Activated CD8-positive, alpha-beta T cell treated with anti-CD3 and anti-CD28 coated beads, Interleukin-2, amount 10 ng/mL, durations not matched to agents 7 days and 5 days (primary cell): ENCODE measurements at regions of chr17 and their contacts with region 1.

Region 1: DNA sequence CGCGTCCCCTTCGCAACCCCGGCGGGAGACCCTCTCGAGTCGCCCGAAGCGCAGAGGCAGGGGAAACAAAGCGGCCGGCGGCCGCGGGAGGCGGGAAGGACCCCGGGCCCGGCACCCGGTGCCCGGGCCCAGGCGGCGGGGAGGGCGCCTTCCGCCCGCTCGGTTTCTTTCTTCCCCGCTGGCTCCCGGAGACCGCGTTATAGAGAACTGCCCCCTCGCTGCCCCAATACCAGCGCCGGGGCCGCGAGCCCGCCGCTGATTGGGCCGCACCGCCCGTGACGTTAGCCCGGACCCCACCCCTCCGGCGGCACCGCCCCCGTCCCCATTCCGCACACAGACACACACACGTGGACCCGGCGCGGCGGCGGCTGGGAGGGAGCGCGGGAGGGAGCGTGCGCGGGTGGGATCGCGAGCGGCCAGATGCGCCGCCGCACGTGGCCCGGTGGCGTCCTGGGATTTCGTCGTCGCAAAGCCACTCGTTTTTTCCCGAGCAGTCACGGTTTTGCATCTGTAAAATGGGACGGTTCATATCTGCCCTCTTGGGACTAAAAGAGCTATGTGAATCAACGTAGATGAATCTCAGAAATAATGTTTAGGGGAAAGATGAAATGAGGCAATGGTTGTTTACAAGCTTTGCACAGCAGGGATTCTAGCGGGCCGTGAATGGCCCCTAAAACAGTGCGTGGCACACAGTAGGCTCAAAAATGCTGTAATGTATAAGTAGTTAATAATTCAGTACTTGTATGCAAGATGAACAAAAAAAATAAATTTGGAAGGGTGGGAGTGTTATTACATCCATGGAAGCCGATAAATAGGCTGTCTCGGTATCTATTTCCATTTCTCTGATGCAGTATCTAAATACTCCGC is at the start of gene EPOP:
- DNase-seq: peak; percentile 91
- ATAC-seq: peak; percentile 89
- H3K4me3 Mint-ChIP-seq: peak within 1 kb of the TSS; percentile 54
- H3K27ac Mint-ChIP-seq: peak within 1 kb of the TSS; percentile 60
- H3K4me1 Mint-ChIP-seq: peaks cover 40% of the 10 kb centered on the region
- H3K27me3 Mint-ChIP-seq: peaks cover 22% of the 10 kb centered on the region
- total RNA-seq, gene EPOP: 11.4 to 11.6 TPM

Region 2: DNA sequence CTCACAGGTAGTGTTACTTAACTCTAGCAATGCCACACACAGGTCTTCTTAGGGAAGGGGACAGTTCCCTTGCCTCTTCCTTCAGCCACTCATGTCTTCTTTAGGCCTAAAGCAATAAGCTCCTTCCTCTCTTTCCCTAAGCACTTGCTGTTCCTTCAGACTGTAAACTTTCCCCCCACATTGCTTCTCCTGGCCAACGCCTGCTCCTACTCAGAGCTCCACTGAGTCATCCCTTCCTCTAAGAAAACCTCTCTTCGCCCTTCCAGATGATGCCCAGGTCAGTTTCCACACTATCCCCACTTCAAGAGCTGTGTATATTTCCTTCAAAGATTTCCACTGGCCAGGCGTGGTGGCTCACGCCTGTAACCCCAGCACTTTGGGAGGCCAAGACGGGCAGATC is 12.3 kb after region 1 on chr17:
- CTCF ChIA-PET with region 1: interaction called, 19 read pairs
- POLR2A ChIA-PET with region 1: no interaction called
- DNase-seq: no peak
- ATAC-seq: no peak
- H3K4me3 Mint-ChIP-seq: no peak overlapping the region
- H3K27ac Mint-ChIP-seq: no peak overlapping the region
- H3K4me1 Mint-ChIP-seq: no peaks in the 10 kb centered on the region
- H3K27me3 Mint-ChIP-seq: peaks cover 12% of the 10 kb centered on the region

Region 3: DNA sequence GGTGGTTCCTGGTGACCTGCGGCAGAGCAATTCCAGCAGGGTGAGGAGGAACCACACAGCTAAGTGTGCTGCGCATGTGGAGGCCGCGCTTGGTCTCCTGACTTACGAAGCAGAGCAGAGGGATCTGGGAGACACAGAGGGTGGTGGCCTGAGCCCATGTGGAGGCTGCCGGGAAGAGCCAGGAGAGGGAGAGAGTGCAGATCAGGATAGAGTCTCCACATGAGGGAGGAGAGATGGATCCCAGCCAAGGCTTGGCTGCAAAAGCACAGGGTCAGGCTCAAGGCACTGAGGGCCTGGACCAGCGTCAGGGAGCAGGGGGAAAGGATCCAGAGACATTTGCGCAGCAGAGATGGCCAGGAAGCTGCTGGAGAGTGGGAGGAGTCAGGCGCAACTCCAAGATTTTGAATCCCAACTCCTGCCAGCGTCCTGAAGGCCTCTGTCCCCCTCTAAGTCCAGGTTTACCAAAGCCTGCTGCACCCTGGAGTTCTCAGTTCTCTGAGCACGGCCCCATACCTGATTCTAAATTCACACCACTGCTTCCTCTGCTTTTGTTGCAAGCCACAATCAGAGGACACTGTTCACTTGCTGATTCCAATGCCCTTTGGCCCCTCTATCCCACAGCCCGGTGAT is 18.8 kb after region 1 on chr17:
- CTCF ChIA-PET with region 1: interaction called, 22 read pairs
- POLR2A ChIA-PET with region 1: interaction called, 3 read pairs
- DNase-seq: no peak
- ATAC-seq: no peak
- H3K4me3 Mint-ChIP-seq: no peak overlapping the region
- H3K27ac Mint-ChIP-seq: no peak overlapping the region
- H3K4me1 Mint-ChIP-seq: peaks cover 26% of the 10 kb centered on the region
- H3K27me3 Mint-ChIP-seq: no peaks in the 10 kb centered on the region

Region 4: DNA sequence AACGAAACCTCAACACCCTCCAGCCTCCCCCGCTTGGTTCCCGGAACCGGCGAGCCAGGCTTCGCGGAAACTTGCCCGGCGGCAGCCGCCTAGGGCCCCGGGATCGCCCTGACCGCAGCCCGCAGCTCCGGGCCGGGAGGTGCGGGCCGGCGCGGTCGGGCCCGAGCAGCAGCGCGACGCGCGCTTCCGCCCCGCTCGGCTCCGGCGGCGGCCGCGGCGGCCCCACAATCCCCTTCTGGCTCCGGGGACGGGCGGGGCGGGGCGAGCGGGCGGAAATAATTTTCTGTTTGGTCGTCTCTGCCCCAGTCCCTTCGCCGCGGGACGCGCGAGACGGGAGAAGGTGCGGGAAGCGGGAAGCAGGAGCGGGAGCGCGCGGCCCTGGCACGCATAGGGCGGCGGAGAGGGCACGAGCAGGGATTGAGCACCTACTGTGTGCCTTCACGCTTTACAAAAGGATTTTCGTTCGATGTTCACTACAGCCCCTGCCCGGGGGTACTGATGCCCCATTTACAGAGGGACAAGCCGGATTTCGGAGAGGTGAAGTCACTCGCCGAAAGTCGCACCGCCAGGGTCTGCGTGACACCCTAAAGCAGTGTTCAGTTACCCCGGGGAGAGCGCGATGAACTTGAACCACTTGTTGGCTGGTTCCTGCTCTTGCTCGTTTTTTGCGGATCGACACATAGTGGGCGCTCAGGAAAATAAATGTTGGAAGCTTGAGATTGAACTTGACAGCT is 27.4 kb after region 1 on chr17:
- CTCF ChIA-PET with region 1: interaction called, 22 read pairs
- POLR2A ChIA-PET with region 1: interaction called, 13 read pairs
- DNase-seq: peak; percentile 85
- ATAC-seq: peak; percentile 47
- H3K4me3 Mint-ChIP-seq: peak overlapping the region; percentile 87
- H3K27ac Mint-ChIP-seq: peak overlapping the region; percentile 97
- H3K4me1 Mint-ChIP-seq: peaks cover 52% of the 10 kb centered on the region
- H3K27me3 Mint-ChIP-seq: no peaks in the 10 kb centered on the region

Region 5: DNA sequence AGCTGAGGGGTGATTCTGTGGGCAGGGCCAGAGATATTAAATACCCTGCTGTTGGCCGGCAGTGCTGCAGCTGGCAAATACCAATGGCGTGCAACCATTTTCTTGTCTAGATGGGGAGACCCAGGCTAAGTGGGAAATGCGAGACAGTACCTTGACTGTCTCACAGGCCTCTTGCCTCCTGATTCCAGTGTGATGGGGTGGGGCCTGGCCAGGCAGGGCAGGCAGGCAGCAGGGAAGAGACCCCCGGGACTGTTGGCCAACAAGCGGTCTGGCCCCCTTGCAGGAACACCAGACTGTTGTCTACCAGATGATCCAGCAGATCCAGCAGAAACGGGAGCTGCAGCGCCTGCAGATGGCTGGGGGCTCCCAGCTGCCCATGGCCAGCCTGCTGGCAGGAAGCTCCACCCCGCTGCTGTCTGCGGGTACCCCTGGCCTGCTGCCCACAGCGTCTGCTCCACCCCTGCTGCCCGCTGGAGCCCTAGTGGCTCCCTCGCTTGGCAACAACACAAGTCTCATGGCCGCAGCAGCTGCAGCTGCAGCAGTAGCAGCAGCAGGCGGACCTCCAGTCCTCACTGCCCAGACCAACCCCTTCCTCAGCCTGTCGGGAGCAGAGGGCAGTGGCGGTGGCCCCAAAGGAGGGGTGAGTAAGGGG is 49.5 kb after region 1 on chr17:
- CTCF ChIA-PET with region 1: interaction called, 29 read pairs
- POLR2A ChIA-PET with region 1: interaction called, 4 read pairs
- DNase-seq: no peak
- ATAC-seq: no peak
- H3K4me3 Mint-ChIP-seq: no peak overlapping the region
- H3K27ac Mint-ChIP-seq: peak overlapping the region; percentile 52
- H3K4me1 Mint-ChIP-seq: peaks cover 41% of the 10 kb centered on the region
- H3K27me3 Mint-ChIP-seq: no peaks in the 10 kb centered on the region

Region 6: GRCh38 chr17:38729886-38730525 is 55.0 kb after region 1 on chr17 and contains the start of gene CISD3:
- CTCF ChIA-PET with region 1: interaction called, 141 read pairs
- POLR2A ChIA-PET with region 1: interaction called, 9 read pairs
- DNase-seq: peak; percentile 88
- ATAC-seq: peak; percentile 87
- H3K4me3 Mint-ChIP-seq: peak within 1 kb of the TSS; percentile 90
- H3K27ac Mint-ChIP-seq: peak within 1 kb of the TSS; percentile 95
- H3K4me1 Mint-ChIP-seq: peaks cover 74% of the 10 kb centered on the region
- H3K27me3 Mint-ChIP-seq: no peaks in the 10 kb centered on the region
- total RNA-seq, gene CISD3: 48.2 to 56.1 TPM

Region 7: GRCh38 chr17:38752119-38752929 is 77.3 kb after region 1 on chr17 and contains the start of gene PSMB3:
- CTCF ChIA-PET with region 1: interaction called, 10 read pairs
- POLR2A ChIA-PET with region 1: no interaction called
- DNase-seq: peak; percentile 99
- ATAC-seq: peak; percentile 88
- H3K4me3 Mint-ChIP-seq: peak within 1 kb of the TSS; percentile 99
- H3K27ac Mint-ChIP-seq: peak within 1 kb of the TSS; percentile 99
- H3K4me1 Mint-ChIP-seq: peaks cover 39% of the 10 kb centered on the region
- H3K27me3 Mint-ChIP-seq: peaks cover 29% of the 10 kb centered on the region
- total RNA-seq, gene PSMB3: 251 to 252 TPM

Region 8: GRCh38 chr17:39485555-39485954 is 810.6 kb after region 1 on chr17:
- CTCF ChIA-PET with region 1: no interaction called
- POLR2A ChIA-PET with region 1: no interaction called
- DNase-seq: no peak
- ATAC-seq: no peak
- H3K4me3 Mint-ChIP-seq: no peak overlapping the region
- H3K27ac Mint-ChIP-seq: no peak overlapping the region
- H3K4me1 Mint-ChIP-seq: peaks cover 7% of the 10 kb centered on the region
- H3K27me3 Mint-ChIP-seq: no peaks in the 10 kb centered on the region